ENCODE measurements at regions of chr11 and their contacts with region 1.

Region 1: GRCh38 chr11:87187076-87187475 is 149.3 kb downstream of the TMEM135 start:
- DNase-seq: no peak
- ATAC-seq: no peak
- H3K4me3 ChIP-seq: no peak overlapping the region
- H3K27ac ChIP-seq: no peak overlapping the region
- H3K4me1 ChIP-seq: no peaks in the 10 kb centered on the region
- H3K27me3 ChIP-seq: no peaks in the 10 kb centered on the region
- CTCF ChIP-seq: no peak
- POLR2A ChIP-seq: no peak
- RAD21 ChIP-seq: no peak

Region 2: GRCh38 chr11:87223816-87224215 is 36.7 kb after region 1 on chr11:
- CTCF ChIA-PET with region 1: no interaction called
- POLR2A ChIA-PET with region 1: no interaction called
- dilution Hi-C with region 1: no loop called
- in situ Hi-C with region 1: no loop called
- intact Hi-C with region 1: loop called (anchors 5 kb)
- DNase-seq: peak; percentile 8
- ATAC-seq: no peak
- H3K4me3 ChIP-seq: no peak overlapping the region
- H3K27ac ChIP-seq: no peak overlapping the region
- H3K4me1 ChIP-seq: no peaks in the 10 kb centered on the region
- H3K27me3 ChIP-seq: no peaks in the 10 kb centered on the region
- CTCF ChIP-seq: no peak
- POLR2A ChIP-seq: no peak
- RAD21 ChIP-seq: no peak